ENCODE measurements at regions of chr7 and their contacts with region 1.

Region 1: GRCh38 chr7:7182156-7183060 is at the start of gene C1GALT1:
- DNase-seq: peak; percentile 97
- H3K4me3 Mint-ChIP-seq: peak within 1 kb of the TSS; percentile 90
- H3K27ac Mint-ChIP-seq: peak within 1 kb of the TSS; percentile 98
- H3K4me1 Mint-ChIP-seq: peaks cover 19% of the 10 kb centered on the region
- H3K27me3 Mint-ChIP-seq: no peaks in the 10 kb centered on the region
- total RNA-seq, gene C1GALT1: 25.7 to 29.1 TPM

Region 2: DNA sequence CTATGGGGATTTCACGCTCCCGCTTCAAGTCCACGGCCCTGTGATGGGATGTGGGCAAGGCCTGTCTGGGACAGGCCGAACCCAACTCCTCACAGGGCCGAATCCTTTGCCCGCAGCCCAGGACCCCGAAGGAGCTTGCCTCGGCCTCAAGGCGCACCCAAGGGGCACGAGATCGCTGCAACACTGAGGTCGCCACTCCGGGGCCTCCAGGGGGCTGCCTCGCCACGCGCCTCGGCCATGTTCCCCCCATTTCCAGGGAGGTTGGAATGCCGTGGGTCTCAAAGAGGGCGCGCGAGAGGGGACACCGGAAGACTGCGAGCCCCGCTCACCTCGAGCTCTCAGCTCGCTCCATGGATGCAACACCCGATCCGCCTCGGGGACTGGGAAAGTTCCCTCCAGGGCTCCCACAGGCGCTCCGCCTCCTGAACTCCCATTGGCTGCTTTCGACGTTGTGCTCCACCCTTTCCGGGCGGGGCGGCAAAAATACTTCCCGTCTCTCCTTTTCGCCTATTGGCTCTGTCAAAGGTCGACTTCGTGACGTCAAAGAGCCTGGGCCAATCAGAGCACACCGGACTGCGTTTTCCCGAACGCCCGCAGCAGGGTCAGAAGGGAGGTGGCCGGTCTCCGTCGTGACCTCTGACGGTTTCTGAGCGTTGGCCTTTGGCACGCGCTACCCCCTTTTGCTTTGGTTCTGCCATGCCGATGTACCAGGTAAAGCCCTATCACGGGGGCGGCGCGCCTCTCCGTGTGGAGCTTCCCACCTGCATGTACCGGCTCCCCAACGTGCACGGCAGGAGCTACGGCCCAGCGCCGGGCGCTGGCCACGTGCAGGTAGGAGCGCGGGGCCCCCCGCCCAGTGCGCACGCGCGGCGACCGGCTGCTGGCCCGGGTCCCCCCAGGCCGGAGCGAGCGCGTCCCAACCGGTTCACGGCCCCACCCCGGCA is 1173.5 kb before region 1 on chr7 and contains the starts of genes AIMP2 and PMS2:
- CTCF ChIA-PET with region 1: no interaction called
- intact Hi-C with region 1: loop called (anchors 5 kb)
- DNase-seq: peak; percentile 99
- H3K4me3 Mint-ChIP-seq: peak within 1 kb of the TSS; percentile 87
- H3K27ac Mint-ChIP-seq: peak within 1 kb of the TSS; percentile 89
- H3K4me1 Mint-ChIP-seq: peaks cover 45% of the 10 kb centered on the region
- H3K27me3 Mint-ChIP-seq: no peaks in the 10 kb centered on the region
- total RNA-seq, gene AIMP2: 30.8 to 32.2 TPM
- total RNA-seq, gene PMS2: 19.4 to 19.8 TPM

Region 3: DNA sequence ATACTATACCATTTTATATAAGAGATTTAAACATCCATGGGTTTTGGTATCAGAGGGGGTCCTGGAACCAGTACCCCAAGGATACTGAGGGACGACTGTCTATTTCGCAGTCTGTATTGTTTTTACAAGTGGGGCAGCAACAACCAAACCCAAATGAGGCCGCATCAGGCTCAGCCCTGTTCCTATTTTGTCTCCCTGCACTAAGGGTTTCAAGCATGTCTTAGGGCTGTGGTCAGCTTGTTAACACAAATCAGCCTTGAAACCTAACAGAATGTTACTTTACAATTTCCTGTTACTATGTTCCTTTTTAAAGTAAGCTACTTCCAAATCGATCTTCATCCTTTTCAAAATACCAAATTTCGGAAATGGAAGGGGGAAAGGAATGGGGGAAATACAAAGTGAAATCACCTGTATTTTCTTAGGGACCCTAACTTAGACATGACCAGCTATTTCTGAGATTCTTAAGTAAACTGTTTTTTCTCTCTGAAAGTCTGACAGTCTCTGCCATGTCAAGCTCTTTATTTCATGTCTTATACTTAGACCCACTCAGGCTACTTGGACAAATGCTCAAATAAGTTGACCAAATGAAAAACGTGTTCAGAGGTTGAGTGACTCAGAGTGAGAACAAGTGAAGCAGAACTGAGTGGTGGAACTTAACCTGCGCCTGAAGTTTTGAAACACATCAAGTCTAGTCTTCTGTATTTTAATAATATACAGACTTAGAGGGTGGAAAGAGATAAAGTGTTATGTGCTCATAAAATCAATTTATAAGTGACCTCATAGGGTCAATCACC is 75.7 kb after region 1 on chr7:
- CTCF ChIA-PET with region 1: interaction called, 3 read pairs
- intact Hi-C with region 1: loop called (anchors 1 kb)
- DNase-seq: no peak
- H3K4me3 Mint-ChIP-seq: no peak overlapping the region
- H3K27ac Mint-ChIP-seq: peak overlapping the region; percentile 64
- H3K4me1 Mint-ChIP-seq: peaks cover 24% of the 10 kb centered on the region
- H3K27me3 Mint-ChIP-seq: no peaks in the 10 kb centered on the region

Region 4: DNA sequence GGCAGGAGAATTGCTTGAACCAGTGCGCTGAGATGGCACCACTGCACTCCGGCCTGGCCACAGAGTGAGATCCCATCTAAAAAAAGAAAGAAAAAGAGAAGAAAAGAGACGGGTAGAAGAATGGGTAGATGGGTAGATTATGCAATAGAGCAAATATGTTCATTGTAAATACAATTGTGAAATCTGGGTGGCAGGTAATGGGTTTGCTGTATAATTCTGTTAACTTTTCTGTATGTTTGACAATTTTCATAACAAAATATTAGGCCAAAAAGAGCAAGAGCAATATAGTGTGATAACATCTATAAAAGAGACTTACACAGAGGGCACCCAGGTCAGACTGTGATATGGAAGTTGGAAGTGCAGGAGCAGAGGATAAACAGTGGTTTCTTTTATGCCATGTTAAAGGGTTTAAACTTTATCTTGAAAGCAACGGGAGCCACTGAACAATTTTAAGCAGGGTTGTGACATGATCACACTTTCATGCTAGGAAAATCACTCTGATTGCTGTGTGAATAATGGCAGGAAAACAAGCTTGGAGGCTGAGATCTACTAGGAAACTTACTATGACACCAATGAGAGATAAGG is 359.9 kb after region 1 on chr7:
- CTCF ChIA-PET with region 1: interaction called, 3 read pairs
- intact Hi-C with region 1: loop called (anchors 2 kb)
- DNase-seq: no peak
- H3K4me3 Mint-ChIP-seq: no peak overlapping the region
- H3K27ac Mint-ChIP-seq: no peak overlapping the region
- H3K4me1 Mint-ChIP-seq: no peaks in the 10 kb centered on the region
- H3K27me3 Mint-ChIP-seq: no peaks in the 10 kb centered on the region

Region 5: GRCh38 chr7:7719236-7719635 is 536.8 kb after region 1 on chr7:
- CTCF ChIA-PET with region 1: no interaction called
- intact Hi-C with region 1: loop called (anchors 2 kb)
- DNase-seq: peak; percentile 77
- H3K4me3 Mint-ChIP-seq: no peak overlapping the region
- H3K27ac Mint-ChIP-seq: peak overlapping the region; percentile 63
- H3K4me1 Mint-ChIP-seq: peaks cover 19% of the 10 kb centered on the region
- H3K27me3 Mint-ChIP-seq: no peaks in the 10 kb centered on the region

Region 6: GRCh38 chr7:8134089-8134733 is 951.8 kb after region 1 on chr7:
- CTCF ChIA-PET with region 1: no interaction called
- intact Hi-C with region 1: loop called (anchors 1 kb)
- DNase-seq: peak; percentile 71
- H3K4me3 Mint-ChIP-seq: peak overlapping the region; percentile 33
- H3K27ac Mint-ChIP-seq: peak overlapping the region; percentile 68
- H3K4me1 Mint-ChIP-seq: peaks cover 52% of the 10 kb centered on the region
- H3K27me3 Mint-ChIP-seq: no peaks in the 10 kb centered on the region

Measured in activated naive CD4-positive, alpha-beta T cell treated with anti-CD3 and anti-CD28 coated beads for 36 hours (primary cell).